Esophagus squamous epithelium (tissue), 5 donors: ENCODE measurements at regions of chr18 and their contacts with region 1.

Region 1: DNA sequence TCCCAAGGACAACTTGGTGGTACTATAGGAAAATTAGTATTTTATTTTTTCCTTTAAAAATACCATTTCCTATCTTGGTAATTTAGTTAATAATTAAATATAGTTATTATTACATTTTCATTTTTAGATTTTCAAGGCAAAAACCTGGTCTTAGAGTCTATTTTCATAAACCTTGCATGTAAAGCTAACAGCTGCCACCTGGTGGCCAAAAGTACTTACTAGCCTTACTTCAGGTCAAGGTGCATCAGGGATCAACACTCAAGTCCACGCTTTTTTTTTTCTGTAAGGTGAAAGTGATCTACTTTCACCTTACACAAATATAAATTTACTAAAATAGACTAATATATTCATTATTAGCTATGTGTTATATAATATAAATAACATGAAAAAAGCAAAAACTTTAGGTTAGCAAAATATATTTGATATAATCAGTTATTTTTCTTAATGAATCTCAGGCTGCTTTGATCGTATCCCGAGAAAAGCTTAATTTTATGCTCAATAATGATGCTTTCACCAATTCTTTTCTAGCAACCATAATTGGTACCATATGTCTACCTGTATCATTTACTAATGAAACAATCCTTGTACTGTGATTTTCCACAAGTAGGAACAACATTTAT is 62.5 kb downstream of the RELCH start:
- DNase-seq: peak; percentile 1
- H3K4me3 ChIP-seq: no peak overlapping the region
- H3K27ac ChIP-seq: no peak overlapping the region
- H3K4me1 ChIP-seq: no peaks in the 10 kb centered on the region
- H3K27me3 ChIP-seq: no peaks in the 10 kb centered on the region
- CTCF ChIP-seq: peak; percentile 65 to 83 (median 70)
- POLR2A ChIP-seq: no peak

Region 2: DNA sequence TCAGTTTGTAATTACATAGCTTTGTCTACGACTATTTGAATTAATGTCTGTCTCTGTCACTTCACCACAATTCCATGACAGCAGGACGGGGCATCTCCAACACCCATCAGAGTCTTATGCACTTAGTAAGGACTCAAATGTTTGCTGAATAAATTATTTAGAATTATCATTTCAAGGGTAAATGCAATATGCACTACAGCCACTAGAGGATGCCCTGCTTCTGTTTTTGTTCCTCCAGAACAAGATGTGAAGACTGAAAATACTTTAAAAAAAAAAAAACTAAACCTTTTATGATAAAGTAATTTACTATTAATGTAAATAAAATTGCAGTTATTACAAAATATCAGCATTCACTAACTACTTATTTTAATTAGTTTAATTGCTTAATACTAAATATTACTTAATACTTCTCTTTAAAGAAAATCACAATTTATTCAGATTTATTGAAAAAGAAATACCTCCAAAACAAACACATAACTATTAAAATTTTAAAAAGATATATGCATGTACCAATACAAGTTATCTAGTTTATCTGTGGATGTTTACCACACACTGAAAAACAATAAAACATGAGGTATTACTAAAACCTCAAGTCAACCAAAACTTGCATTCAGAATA is 65.9 kb before region 1 on chr18:
- intact Hi-C with region 1: loop called (anchors 5 kb)
- DNase-seq: no peak
- H3K4me3 ChIP-seq: no peak overlapping the region
- H3K27ac ChIP-seq: no peak overlapping the region
- H3K4me1 ChIP-seq: peaks cover 0 to 38% (median 2%) of the 10 kb centered on the region in 3 donors
- H3K27me3 ChIP-seq: no peaks in the 10 kb centered on the region
- CTCF ChIP-seq: peak; percentile 87 to 98 (median 96)
- POLR2A ChIP-seq: no peak